GM10248 (cell line): ENCODE measurements at regions of chr2 and their contacts with region 1.

Region 1: DNA sequence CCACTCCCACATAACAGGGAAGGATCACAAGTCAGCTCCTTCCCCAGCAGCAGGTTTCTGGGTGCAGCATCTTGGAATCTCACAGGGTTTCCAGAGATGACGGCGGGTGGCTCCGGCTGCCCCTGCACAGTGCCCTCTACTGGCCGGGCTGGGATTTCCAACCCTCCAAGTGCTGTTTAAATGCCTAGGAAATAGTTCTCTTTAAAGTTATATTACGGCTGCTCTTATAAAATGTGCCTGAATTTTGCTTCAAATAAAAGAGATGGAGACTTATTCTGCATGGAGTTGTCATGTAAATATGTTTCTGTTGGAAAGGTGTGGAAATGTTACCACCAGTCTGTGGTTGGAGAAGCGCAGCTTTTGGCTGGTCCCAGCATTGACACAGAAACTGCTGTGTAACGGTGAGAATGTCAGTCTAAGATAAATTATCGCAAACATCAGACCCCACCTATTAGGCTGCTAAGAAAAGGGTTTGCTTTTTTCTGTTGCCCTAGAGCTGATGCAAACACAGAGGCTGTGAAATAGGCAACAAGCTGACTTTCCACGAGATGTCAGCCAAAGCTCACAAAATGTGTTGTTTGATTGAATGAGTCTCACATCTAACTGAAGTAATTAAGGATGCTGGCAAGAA is 3.3 kb upstream of the HJURP start:
- DNase-seq: no peak
- CTCF ChIP-seq: peak; percentile 68

Region 2: DNA sequence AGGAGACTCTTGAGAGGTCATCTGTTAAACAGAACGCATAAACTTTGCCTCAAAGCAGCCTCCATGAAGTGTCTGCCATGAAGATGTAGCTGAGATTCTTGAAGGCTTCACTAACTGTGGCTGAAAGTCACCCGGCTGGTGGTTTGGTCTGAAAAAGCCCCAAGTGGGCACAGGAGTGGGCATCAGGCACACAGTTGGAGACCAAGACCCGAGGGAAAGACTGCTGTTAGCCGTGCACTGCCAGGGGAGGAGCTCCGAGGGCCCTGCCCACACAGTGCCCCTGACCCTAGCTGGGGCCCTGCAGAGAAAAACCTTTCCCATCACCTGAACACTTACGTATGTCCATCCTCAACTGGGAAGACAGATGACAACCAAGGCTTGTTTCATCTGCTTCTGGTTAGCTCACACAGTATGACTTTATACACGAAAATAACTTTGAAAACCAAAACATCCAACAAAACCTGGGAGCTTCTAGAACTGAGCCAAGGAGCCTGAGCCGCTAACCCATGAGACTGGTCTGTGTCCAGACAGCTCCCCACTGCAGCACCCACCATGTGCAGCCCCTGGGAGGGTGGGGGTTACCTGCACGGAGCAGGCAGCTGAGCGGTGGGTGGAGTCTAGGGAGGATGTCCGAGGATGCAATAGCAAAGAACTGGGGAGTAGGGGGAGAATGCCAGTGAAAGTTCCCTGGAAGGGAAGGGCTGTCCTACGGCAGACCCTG is 18.7 kb before region 1 on chr2:
- CTCF ChIA-PET with region 1: interaction called, 10 read pairs
- POLR2A ChIA-PET with region 1: no interaction called
- DNase-seq: no peak
- CTCF ChIP-seq: no peak

Region 3: DNA sequence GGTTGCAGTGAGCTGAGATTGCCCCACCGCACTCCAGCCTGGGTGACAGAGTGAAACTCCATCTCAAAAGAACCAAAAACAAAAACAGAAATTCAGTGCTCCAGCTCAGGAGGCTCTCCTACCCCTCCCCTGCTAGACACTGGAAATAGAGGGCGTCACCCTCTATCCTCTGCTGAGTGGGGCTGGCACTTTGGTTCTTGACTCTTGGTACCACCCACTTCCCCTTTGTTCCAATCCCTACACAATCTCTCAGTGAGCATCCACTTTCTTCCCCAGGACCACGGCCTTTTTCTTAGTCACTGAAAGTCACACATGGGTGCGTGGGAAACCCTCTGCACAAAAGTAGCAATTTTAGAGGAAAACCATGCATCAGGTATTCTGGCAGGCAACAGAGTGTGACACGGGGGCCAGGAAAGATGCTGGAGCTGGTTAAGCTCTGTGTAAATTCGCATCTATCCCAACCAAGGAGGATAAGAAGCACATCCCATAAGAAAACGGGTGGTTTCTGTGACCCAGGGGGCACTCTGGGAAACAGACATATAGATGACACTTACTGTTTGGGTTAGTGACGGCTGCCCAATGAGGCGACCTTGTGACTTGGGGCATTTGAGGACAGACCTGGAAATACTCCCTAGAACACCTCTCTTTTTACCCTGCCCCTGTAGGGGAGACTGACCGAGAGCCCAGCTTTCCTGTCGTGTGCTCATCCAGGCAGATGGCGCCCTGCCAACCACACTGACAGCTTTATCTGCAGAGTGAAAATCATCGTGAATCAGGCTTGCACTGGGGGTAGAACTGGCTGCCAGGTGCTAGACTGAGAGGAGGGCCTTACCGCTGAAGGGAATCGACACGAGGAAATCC is 11.0 kb before region 1 on chr2:
- CTCF ChIA-PET with region 1: interaction called, 19 read pairs
- POLR2A ChIA-PET with region 1: no interaction called
- DNase-seq: no peak
- CTCF ChIP-seq: no peak

Region 4: DNA sequence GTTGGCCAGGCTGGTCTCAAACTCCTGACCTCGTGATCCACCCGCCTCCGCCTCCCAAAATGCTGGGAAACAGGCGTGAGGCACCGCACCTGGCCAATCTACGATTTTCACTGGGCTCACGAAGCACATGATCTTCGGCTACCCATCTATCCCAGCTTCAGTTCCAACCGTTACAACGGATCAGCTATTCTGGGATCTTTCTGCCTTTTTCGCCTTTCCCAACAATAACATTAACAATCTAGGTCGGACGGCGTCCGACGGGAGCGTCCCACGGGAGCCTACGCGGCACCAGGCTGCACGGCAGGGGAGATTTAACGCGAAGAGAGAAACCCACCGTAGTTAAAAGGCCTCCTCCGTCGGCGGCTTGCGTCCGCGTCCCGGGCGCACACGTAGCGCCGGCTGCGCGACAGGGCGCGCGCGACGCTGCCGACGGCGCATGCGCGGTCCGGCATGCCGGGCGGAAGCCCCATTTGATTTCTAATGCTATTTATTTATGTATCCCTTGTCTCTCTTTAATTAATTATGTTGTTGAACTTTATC is 10.4 kb after region 1 on chr2 and contains the start of gene MSL3B:
- CTCF ChIA-PET with region 1: interaction called, 10 read pairs
- POLR2A ChIA-PET with region 1: no interaction called
- DNase-seq: peak; percentile 89
- CTCF ChIP-seq: no peak